ENCODE measurements at regions of chr2 and their contacts with region 1.

Region 1: GRCh38 chr2:47862949-47863348 is 43.3 kb downstream of the FBXO11 start:
- DNase-seq: no peak
- ATAC-seq: no peak
- H3K4me3 ChIP-seq: no peak overlapping the region
- H3K27ac ChIP-seq: no peak overlapping the region
- H3K4me1 ChIP-seq: peaks cover 10% of the 10 kb centered on the region; the same call in 1 of the 2 replicates
- H3K27me3 ChIP-seq: no peaks in the 10 kb centered on the region
- CTCF ChIP-seq: no peak

Region 2: GRCh38 chr2:47602996-47603395 is 260.0 kb before region 1 on chr2:
- CTCF ChIA-PET with region 1: no interaction called
- POLR2A ChIA-PET with region 1: no interaction called
- in situ Hi-C with region 1: no loop called
- intact Hi-C with region 1: no loop called
- DNase-seq: no peak
- ATAC-seq: no peak
- H3K4me3 ChIP-seq: no peak overlapping the region
- H3K27ac ChIP-seq: no peak overlapping the region
- H3K4me1 ChIP-seq: no peaks in the 10 kb centered on the region
- H3K27me3 ChIP-seq: peaks cover 7% of the 10 kb centered on the region; the same call in 1 of the 2 replicates
- CTCF ChIP-seq: no peak

Region 3: DNA sequence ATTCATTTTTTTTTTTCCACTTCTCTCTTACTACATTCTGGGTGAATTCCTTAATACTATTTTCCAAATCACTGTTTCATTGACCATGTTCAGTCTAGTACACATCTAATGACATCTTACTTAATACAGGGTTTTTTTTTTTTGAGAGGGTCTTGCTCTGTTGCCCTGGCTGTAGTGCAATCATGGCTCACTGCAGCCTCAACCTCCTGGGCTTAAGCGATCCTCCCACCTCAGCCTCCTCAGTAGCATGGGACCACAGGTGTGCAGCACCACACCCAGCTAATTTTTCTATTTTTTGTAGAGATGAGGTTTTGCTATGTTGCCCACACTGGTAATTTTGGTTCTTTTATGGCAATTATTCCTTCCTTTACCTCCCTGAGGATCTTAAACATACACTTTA is 14.0 kb after region 1 on chr2:
- CTCF ChIA-PET with region 1: interaction called, 10 read pairs
- POLR2A ChIA-PET with region 1: no interaction called
- in situ Hi-C with region 1: no loop called
- intact Hi-C with region 1: no loop called
- DNase-seq: no peak
- ATAC-seq: no peak
- H3K4me3 ChIP-seq: no peak overlapping the region
- H3K27ac ChIP-seq: no peak overlapping the region
- H3K4me1 ChIP-seq: no peaks in the 10 kb centered on the region
- H3K27me3 ChIP-seq: no peaks in the 10 kb centered on the region
- CTCF ChIP-seq: no peak

Region 4: GRCh38 chr2:47917276-47917961 is 54.5 kb after region 1 on chr2:
- CTCF ChIA-PET with region 1: no interaction called
- POLR2A ChIA-PET with region 1: interaction called, 10 read pairs
- in situ Hi-C with region 1: no loop called
- intact Hi-C with region 1: no loop called
- DNase-seq: no peak
- ATAC-seq: no peak
- H3K4me3 ChIP-seq: no peak overlapping the region
- H3K27ac ChIP-seq: no peak overlapping the region
- H3K4me1 ChIP-seq: no peaks in the 10 kb centered on the region
- H3K27me3 ChIP-seq: no peaks in the 10 kb centered on the region
- CTCF ChIP-seq: no peak

Region 5: DNA sequence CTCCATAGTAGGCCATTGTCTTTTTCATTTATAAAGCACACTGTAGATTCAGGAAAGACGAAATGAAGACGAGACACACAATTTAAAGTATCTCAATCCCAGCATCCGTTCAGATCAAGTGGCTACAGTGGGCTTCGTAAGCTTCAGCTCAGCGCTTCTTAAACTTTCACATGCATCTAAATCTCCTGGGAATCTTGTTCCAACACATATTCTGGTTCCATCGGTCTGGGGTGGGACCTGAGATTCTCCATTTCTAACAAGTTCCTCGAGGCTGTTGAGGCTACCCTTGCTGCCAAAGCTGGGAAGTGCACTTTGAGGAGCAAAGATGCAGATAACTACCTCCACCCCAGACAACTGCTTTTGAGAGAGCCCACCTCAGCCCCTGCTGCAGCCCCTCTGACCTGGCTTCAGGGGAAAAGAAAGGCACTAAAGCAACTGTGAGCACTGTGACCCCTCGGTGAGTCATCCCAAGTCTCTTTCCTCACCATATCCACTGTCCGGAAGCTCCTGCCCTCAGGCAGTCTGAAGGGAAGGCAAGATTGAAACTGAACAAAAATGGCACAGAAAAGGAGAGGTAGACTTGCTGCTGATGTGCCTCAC is 244.5 kb after region 1 on chr2:
- CTCF ChIA-PET with region 1: interaction called, 18 read pairs
- POLR2A ChIA-PET with region 1: no interaction called
- in situ Hi-C with region 1: no loop called
- intact Hi-C with region 1: no loop called
- DNase-seq: peak; percentile 17
- ATAC-seq: no peak
- H3K4me3 ChIP-seq: peak overlapping the region in 1 of 2 experiments; percentile 42; a peak in 1 of 4 replicates
- H3K27ac ChIP-seq: peak overlapping the region; percentile 60
- H3K4me1 ChIP-seq: peaks cover 24% of the 10 kb centered on the region
- H3K27me3 ChIP-seq: no peaks in the 10 kb centered on the region
- CTCF ChIP-seq: no peak